PC-3 (cell line): ENCODE measurements at regions of chr16 and their contacts with region 1.

Region 1: DNA sequence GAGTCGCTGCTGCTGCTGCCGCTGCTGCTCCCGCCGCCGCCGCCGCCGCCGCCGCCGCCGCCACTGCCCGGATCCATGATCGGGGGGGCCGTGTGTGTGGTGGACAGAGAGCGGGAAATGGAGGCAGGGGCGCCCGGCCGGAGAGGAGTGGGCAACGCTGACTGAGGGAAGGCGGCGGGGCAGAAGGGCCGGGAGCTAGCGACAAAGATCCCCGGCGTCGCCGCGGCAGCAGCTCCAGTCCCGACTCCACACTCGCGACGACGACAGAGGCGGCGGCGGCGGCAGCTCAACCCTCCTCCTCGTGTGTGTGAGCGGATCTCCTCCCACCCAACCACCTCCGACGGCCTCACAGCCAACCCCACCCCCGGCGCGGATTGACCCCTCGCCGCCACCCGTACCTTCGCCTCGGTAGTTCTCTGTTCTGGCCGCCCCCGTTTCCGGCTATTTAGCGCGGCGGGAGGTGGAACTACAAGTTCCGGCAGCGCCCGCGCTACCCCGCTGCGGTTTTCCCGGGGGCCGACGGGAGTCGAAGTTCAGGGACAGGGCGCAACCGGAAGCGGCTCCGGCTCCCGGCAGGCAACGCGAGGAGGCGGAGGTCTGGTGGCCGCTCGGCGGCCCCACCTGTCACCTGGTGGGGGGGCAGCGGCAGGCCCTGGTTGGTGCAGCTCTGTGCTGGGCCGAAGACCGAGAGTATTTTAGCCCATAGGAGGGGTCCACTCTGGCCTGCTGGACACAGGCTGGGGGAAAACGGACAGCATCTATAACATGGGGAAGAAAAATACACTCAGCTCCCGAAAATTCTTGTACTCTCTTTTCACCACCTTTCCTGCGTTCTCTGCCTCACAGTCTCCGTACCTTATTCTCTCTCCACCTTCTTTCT is at the start of gene GSPT1:
- DNase-seq: peak; percentile 96
- ATAC-seq: peak; percentile 85
- H3K4me3 ChIP-seq: peak within 1 kb of the TSS; percentile 79
- H3K27ac ChIP-seq: peak within 1 kb of the TSS; percentile 97
- H3K4me1 ChIP-seq: peaks cover 23% of the 10 kb centered on the region
- H3K27me3 ChIP-seq: no peaks in the 10 kb centered on the region
- CTCF ChIP-seq: no peak
- total RNA-seq, gene GSPT1: 67.9 and 84.0 TPM in 2 replicates

Region 2: GRCh38 chr16:11851294-11852091 is 64.4 kb before region 1 on chr16 and contains the start of gene RSL1D1:
- CTCF ChIA-PET with region 1: no interaction called
- POLR2A ChIA-PET with region 1: no interaction called
- intact Hi-C with region 1: loop called (anchors 10 kb)
- DNase-seq: peak; percentile 89
- ATAC-seq: peak; percentile 83
- H3K4me3 ChIP-seq: peak within 1 kb of the TSS; percentile 95
- H3K27ac ChIP-seq: peak within 1 kb of the TSS; percentile 72
- H3K4me1 ChIP-seq: peaks cover 11% of the 10 kb centered on the region; the same call in 1 of the 2 replicates
- H3K27me3 ChIP-seq: no peaks in the 10 kb centered on the region
- CTCF ChIP-seq: no peak
- total RNA-seq, gene RSL1D1: 75.9 and 105 TPM in 2 replicates